Activated B cell treated with CpG ODN at 0.5 μM for 24 hours (primary cell): ENCODE measurements at regions of chr14 and their contacts with region 1.

Region 1: GRCh38 chr14:62117010-62117750 is 355.0 kb downstream of the SNAPC1 start:
- DNase-seq: peak; percentile 64
- ATAC-seq: peak; percentile 99
- H3K4me3 Mint-ChIP-seq: peak overlapping the region; percentile 89
- H3K27ac Mint-ChIP-seq: peak overlapping the region; percentile 77
- H3K4me1 Mint-ChIP-seq: peaks cover 40% of the 10 kb centered on the region
- H3K27me3 Mint-ChIP-seq: no peaks in the 10 kb centered on the region
- CTCF ChIP-seq: no peak

Region 2: GRCh38 chr14:61326847-61327246 is 790.3 kb before region 1 on chr14:
- CTCF ChIA-PET with region 1: no interaction called
- POLR2A ChIA-PET with region 1: no interaction called
- intact Hi-C with region 1: loop called (anchors 5 kb)
- DNase-seq: no peak
- ATAC-seq: no peak
- H3K4me3 Mint-ChIP-seq: no peak overlapping the region
- H3K27ac Mint-ChIP-seq: no peak overlapping the region
- H3K4me1 Mint-ChIP-seq: peaks cover 24% of the 10 kb centered on the region
- H3K27me3 Mint-ChIP-seq: peaks cover 6% of the 10 kb centered on the region
- CTCF ChIP-seq: no peak

Region 3: DNA sequence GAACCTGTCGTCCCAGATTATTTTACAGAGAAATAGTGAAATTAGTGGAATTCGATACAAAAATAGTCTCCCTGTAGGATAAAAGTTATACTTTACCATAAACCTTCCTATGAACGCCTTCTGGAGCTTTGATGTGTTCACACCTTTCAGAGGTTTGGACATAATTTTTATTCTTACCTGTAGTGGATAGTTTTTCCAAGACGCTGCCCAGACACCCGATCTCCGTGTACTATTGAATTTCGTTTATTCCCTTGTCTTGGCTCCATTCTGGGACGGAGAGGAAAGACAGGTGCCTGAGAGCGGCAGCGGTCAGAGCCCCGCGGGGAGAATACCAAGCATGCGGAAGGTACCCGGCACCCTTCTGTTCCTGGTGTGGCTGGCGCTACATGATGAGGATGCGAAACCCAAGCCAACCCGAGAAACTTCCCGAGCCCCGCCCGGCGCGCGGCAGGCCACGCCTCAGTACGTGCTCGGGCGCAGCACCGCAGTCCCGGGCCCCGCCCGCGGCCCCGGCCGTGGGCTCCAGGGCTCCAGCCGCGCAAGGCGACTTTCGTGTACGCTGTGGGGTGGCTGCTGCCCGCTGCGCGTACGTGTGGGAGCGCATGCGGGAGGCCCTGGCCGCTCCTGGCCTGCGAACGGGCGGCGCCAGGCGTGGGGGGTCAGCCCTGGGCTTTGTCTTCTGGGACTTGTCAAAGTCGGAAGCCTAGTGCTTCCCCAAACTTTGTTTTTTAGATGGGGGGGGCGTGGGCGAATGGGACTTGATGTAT is 366.3 kb before region 1 on chr14:
- CTCF ChIA-PET with region 1: no interaction called
- POLR2A ChIA-PET with region 1: no interaction called
- intact Hi-C with region 1: loop called (anchors 5 kb)
- DNase-seq: peak; percentile 81
- ATAC-seq: peak; percentile 95
- H3K4me3 Mint-ChIP-seq: peak overlapping the region; percentile 87
- H3K27ac Mint-ChIP-seq: peak overlapping the region; percentile 90
- H3K4me1 Mint-ChIP-seq: peaks cover 41% of the 10 kb centered on the region
- H3K27me3 Mint-ChIP-seq: no peaks in the 10 kb centered on the region
- CTCF ChIP-seq: no peak

Region 4: GRCh38 chr14:61894452-61895077 is 222.6 kb before region 1 on chr14:
- CTCF ChIA-PET with region 1: interaction called, 10 read pairs
- POLR2A ChIA-PET with region 1: no interaction called
- intact Hi-C with region 1: no loop called
- DNase-seq: peak; percentile 30
- ATAC-seq: no peak
- H3K4me3 Mint-ChIP-seq: no peak overlapping the region
- H3K27ac Mint-ChIP-seq: no peak overlapping the region
- H3K4me1 Mint-ChIP-seq: peaks cover 30% of the 10 kb centered on the region
- H3K27me3 Mint-ChIP-seq: no peaks in the 10 kb centered on the region
- CTCF ChIP-seq: peak; percentile 57

Region 5: DNA sequence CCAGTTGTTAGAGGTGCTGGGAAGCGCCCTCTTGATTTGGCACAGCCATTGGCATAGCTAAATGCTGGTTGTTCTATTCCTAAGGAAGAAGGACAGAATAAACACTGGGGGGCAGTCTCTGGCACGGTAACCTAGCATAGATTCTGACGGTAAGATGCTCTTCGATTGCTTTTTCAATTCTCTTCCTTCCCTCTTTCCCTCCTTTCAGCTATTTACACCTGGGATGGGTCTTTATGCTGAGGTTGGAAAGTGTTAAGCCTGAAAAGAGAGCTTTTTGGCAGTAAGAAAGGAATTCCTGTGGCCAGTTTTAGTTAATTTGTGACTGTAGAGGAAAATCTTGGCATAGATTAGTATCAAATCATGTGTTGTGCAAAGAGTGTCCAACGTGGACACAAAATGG is 192.1 kb before region 1 on chr14:
- CTCF ChIA-PET with region 1: interaction called, 324 read pairs
- POLR2A ChIA-PET with region 1: interaction called, 3 read pairs
- intact Hi-C with region 1: no loop called
- DNase-seq: no peak
- ATAC-seq: peak; percentile 70
- H3K4me3 Mint-ChIP-seq: peak overlapping the region; percentile 21
- H3K27ac Mint-ChIP-seq: no peak overlapping the region
- H3K4me1 Mint-ChIP-seq: peaks cover 20% of the 10 kb centered on the region
- H3K27me3 Mint-ChIP-seq: no peaks in the 10 kb centered on the region
- CTCF ChIP-seq: peak; percentile 45

Region 6: DNA sequence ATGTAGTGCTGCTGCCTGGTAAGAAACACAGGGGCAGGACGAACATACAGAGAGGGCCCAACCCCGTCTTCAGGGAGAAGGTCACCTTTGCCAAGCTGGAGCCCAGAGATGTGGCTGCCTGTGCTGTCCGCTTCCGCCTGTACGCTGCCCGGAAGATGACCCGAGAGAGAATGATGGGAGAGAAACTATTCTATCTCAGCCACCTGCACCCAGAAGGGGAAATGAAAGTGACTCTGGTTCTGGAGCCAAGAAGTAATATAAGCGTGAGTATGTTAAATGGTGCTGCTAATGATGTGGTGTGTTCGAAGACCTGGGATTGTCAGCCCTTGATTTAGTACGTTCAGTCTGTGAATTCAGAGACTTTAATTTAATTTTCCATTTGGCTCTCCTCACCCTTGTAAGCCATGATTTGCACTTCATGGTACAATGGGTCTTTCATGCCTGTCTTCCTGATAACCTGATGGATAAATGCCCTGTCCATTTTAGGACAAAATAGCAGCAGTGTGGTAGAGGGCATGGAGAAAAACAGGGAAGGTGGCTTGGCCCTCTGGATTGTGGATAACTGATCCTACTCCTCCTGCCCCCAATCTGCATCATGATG is 36.1 kb before region 1 on chr14:
- CTCF ChIA-PET with region 1: interaction called, 6 read pairs
- POLR2A ChIA-PET with region 1: interaction called, 11 read pairs
- intact Hi-C with region 1: loop called (anchors 1 kb)
- DNase-seq: peak; percentile 44
- ATAC-seq: peak; percentile 69
- H3K4me3 Mint-ChIP-seq: peak overlapping the region; percentile 78
- H3K27ac Mint-ChIP-seq: peak overlapping the region; percentile 94
- H3K4me1 Mint-ChIP-seq: peaks cover 80% of the 10 kb centered on the region
- H3K27me3 Mint-ChIP-seq: no peaks in the 10 kb centered on the region
- CTCF ChIP-seq: no peak

Region 7: GRCh38 chr14:62097072-62097471 is 20.1 kb before region 1 on chr14:
- CTCF ChIA-PET with region 1: interaction called, 4 read pairs
- POLR2A ChIA-PET with region 1: interaction called, 3 read pairs
- intact Hi-C with region 1: loop called (anchors 2 kb)
- DNase-seq: no peak
- ATAC-seq: peak; percentile 58
- H3K4me3 Mint-ChIP-seq: no peak overlapping the region
- H3K27ac Mint-ChIP-seq: no peak overlapping the region
- H3K4me1 Mint-ChIP-seq: peaks cover 10% of the 10 kb centered on the region
- H3K27me3 Mint-ChIP-seq: no peaks in the 10 kb centered on the region
- CTCF ChIP-seq: no peak

Region 8: DNA sequence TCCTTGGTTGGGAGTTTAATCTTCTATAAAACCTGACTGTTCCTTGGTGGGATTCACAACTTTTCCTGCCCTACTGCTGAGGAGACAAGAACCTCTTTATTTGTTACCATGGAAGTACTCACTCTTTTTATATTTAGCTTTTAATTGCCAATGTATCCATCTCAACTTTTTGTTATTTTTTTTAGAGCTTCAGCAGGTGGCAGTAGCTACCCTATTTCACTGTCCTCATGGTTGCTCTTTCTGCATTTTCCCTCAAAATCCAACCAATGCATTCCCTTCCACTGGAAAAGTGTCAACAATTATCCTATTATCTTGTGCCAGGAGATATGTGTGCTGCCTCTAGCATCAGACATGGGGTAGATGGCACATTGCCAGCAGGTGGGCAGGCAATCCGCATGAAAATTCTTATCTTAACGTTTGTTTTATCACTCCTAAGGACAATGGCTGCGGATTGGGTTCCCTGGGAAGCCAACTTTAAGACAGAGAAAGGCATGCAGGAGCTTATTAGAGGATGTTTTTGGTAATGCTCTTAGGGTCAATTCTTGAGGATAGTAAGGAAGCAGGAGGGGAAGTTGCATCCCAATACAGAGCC is 51.5 kb after region 1 on chr14:
- CTCF ChIA-PET with region 1: no interaction called
- POLR2A ChIA-PET with region 1: no interaction called
- intact Hi-C with region 1: no loop called
- DNase-seq: no peak
- ATAC-seq: no peak
- H3K4me3 Mint-ChIP-seq: no peak overlapping the region
- H3K27ac Mint-ChIP-seq: no peak overlapping the region
- H3K4me1 Mint-ChIP-seq: no peaks in the 10 kb centered on the region
- H3K27me3 Mint-ChIP-seq: peaks cover 22% of the 10 kb centered on the region
- CTCF ChIP-seq: no peak

Region 9: DNA sequence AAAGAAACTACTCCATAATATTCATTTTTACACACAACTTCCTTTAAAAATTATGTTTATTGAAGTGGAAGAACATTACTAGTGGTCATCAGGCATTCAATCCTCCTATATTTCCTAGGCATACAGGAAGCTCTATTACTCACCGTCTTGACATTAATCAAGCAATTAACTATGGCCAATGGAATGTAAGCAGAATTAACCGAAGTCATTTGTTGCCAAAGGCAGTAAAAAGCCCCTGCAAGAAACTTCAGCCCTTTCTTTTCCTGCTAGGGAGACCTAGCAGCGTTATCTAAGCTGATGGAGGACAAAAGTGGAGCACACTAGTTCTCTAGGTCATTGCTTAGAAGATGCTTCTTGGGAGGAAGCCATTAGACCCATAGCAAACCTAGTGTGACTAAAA is 528.5 kb after region 1 on chr14:
- CTCF ChIA-PET with region 1: no interaction called
- POLR2A ChIA-PET with region 1: no interaction called
- intact Hi-C with region 1: no loop called
- DNase-seq: no peak
- ATAC-seq: no peak
- H3K4me3 Mint-ChIP-seq: no peak overlapping the region
- H3K27ac Mint-ChIP-seq: no peak overlapping the region
- H3K4me1 Mint-ChIP-seq: no peaks in the 10 kb centered on the region
- H3K27me3 Mint-ChIP-seq: no peaks in the 10 kb centered on the region
- CTCF ChIP-seq: no peak